PC-3 (cell line): ENCODE measurements at regions of chr10 and their contacts with region 1.

Region 1: DNA sequence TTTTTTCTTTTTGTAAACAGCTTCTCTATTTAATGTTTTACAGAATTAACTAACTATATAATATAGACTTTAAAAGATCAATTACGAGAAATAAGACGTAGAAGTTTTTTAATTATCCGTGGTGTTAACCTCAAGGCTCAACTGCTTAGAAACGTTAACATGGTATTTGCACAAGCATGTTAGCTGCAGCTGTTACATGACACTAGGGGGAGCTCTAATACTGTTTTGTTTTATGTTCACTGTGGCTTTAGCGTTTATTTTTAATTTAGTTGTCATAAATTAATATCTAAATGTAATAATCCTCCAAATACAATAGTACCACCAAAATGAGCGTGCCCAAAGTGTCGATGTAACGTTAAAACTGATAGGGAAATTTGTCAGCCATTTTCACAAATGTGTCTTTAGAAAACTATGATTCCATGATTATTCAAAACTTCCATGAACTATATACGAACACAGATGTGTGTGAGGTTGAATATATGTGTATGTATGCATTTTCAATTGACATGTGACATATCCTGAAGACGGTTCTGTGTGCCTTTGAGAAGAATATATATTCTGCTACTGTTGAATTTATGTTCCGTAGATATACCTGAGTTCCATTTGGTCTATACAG is 828.8 kb upstream of the MBL2 start:
- DNase-seq: peak; percentile 92
- ATAC-seq: peak; percentile 55
- H3K4me3 ChIP-seq: no peak overlapping the region
- H3K27ac ChIP-seq: no peak overlapping the region
- H3K4me1 ChIP-seq: peaks cover 20% of the 10 kb centered on the region
- H3K27me3 ChIP-seq: no peaks in the 10 kb centered on the region
- CTCF ChIP-seq: peak; percentile 100; the same call in 1 of the 2 replicates

Region 2: DNA sequence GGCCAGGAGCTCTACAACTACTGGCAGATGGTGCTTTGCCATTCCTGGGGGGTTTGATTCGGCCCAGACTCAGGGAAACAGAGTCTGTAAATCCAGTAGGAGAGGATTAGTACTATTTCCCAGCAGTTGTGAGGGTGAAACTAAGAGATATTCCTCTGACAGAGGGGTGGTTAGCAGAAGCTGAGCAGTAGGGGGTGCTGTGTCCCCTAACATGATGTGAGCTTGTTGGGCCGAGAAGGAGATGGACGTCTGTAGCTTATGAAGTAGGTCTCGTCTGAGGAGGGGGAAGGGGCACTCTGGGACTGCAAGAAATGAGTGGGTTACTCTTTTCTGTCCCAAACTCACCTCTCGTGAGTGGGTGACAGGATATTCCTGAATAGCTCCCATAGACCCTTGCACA is 649.5 kb before region 1 on chr10:
- CTCF ChIA-PET with region 1: interaction called, 5 read pairs
- POLR2A ChIA-PET with region 1: no interaction called
- intact Hi-C with region 1: loop called (anchors 2 kb)
- DNase-seq: peak; percentile 97
- ATAC-seq: peak; percentile 44
- H3K4me3 ChIP-seq: no peak overlapping the region
- H3K27ac ChIP-seq: no peak overlapping the region
- H3K4me1 ChIP-seq: peaks cover 24% of the 10 kb centered on the region
- H3K27me3 ChIP-seq: no peaks in the 10 kb centered on the region
- CTCF ChIP-seq: peak; percentile 99

Region 3: GRCh38 chr10:53325066-53325465 is 276.3 kb before region 1 on chr10:
- CTCF ChIA-PET with region 1: no interaction called
- POLR2A ChIA-PET with region 1: interaction called, 18 read pairs
- intact Hi-C with region 1: loop called (anchors 2 kb)
- DNase-seq: peak; percentile 98
- ATAC-seq: peak; percentile 97
- H3K4me3 ChIP-seq: no peak overlapping the region
- H3K27ac ChIP-seq: peak overlapping the region; percentile 5; the same call in 1 of the 2 replicates
- H3K4me1 ChIP-seq: peaks cover 18% of the 10 kb centered on the region
- H3K27me3 ChIP-seq: no peaks in the 10 kb centered on the region
- CTCF ChIP-seq: no peak

Region 4: DNA sequence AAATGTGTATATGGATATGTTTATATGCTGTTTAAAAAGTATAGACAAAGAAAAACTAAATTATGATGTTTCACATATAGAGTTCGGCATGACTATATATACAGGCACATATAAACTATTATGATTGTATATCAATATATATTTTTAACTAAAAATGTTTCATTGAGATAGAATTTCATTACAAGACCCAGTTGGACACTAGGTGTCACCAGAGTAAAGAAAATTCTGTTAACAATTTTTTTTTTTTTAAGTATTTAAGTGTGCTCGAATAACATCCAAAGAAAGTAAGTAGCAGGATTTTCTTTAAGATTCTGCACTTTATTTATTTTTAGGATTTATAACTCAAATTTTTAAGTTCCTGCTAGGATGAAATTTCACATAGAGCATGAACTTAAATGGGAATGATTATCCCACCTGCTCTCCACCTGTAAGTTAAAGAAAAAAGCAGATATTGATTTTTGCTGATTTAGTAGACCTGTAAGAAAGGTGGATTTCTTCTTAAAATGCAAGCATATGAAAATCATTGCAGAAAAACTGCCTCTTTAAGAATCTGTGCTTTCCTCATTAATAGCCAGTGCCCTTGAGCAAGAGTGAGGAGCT is 238.2 kb after region 1 on chr10:
- CTCF ChIA-PET with region 1: no interaction called
- POLR2A ChIA-PET with region 1: no interaction called
- intact Hi-C with region 1: loop called (anchors 1 kb)
- DNase-seq: peak; percentile 78
- ATAC-seq: no peak
- H3K4me3 ChIP-seq: no peak overlapping the region
- H3K27ac ChIP-seq: no peak overlapping the region
- H3K4me1 ChIP-seq: peaks cover 9% of the 10 kb centered on the region; the same call in 1 of the 2 replicates
- H3K27me3 ChIP-seq: no peaks in the 10 kb centered on the region
- CTCF ChIP-seq: peak; percentile 71

Region 5: DNA sequence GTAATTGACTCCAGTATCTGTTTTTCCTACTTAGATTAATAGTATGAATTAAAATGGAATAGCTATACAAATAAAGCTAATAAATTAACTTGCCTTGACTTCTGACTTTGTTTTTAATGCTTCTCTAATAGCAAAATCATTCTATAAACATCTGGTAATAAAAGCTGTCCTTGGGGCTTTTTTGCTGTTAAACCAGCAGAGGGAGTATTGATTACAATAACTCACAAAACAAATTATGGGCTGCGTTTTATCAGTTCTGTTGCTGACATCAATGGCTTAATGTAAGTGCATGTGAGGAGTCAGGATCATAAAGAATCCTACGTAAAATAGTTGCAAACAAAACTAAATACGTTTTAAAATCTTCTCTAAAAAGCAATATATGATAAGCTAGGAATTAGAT is 531.8 kb after region 1 on chr10:
- CTCF ChIA-PET with region 1: no interaction called
- POLR2A ChIA-PET with region 1: no interaction called
- intact Hi-C with region 1: loop called (anchors 10 kb)
- DNase-seq: peak; percentile 54
- ATAC-seq: peak; percentile 63
- H3K4me3 ChIP-seq: no peak overlapping the region
- H3K27ac ChIP-seq: no peak overlapping the region
- H3K4me1 ChIP-seq: no peaks in the 10 kb centered on the region
- H3K27me3 ChIP-seq: no peaks in the 10 kb centered on the region
- CTCF ChIP-seq: peak; percentile 91